Head of caudate nucleus (tissue), 42 donors: ENCODE measurements at regions of chr1 and their contacts with region 1.

Region 1: GRCh38 chr1:38026592-38027200 is 14.2 kb downstream of the UTP11 start:
- DNase-seq: peak in 39 of 42 donors; percentile 61 to 88 (median 79)

Region 2: DNA sequence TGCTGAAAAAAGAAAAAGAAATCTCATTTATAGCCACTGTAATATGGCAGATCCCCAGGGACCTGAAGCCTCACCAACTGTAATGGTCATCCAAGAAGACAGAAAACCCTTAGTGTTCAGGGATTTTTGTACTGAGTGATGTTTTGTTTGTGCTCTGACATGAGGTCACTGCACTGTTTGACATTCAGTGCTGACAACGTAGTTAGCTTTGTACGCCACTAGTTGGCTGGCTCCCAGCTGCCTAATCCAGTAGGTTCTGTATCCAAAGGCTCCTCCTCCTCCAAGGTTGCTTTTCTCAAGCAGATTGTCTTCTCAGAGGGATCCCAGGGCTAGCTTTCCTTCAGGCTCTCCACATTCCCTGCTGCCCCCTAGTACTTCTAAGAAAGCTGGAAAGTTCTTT is 209.2 kb before region 1 on chr1:
- intact Hi-C with region 1: no loop called
- DNase-seq: peak in 41 of 42 donors; percentile 39 to 89 (median 73)

Region 3: DNA sequence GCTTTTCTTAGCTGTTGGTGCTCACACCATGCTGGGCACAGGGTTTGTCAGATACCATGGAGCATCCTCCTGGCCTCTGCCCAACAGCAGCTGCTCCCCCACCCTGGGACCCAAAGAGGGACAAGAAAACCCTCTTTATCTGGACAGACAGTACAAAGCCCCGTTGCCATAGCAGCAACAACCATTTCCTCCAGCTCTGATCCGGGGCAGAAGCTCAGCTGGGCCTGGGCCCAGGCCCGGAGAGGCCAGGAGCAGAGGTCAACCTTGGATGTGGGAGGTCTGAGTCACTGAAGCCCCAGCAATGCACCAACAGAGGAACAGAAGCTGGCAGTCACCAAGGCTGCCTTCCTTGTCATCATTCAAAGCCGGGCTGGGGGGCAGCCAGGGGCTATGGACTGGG is 248.3 kb after region 1 on chr1:
- intact Hi-C with region 1: no loop called
- DNase-seq: peak in 24 of 42 donors; percentile 4 to 69 (median 25)

Region 4: GRCh38 chr1:38834937-38835827 is 808.5 kb after region 1 on chr1:
- intact Hi-C with region 1: loop called (anchors 10 kb)
- DNase-seq: peak in 21 of 42 donors; percentile 23 to 83 (median 61)